ENCODE measurements at regions of chr11 and their contacts with region 1.

Region 1: DNA sequence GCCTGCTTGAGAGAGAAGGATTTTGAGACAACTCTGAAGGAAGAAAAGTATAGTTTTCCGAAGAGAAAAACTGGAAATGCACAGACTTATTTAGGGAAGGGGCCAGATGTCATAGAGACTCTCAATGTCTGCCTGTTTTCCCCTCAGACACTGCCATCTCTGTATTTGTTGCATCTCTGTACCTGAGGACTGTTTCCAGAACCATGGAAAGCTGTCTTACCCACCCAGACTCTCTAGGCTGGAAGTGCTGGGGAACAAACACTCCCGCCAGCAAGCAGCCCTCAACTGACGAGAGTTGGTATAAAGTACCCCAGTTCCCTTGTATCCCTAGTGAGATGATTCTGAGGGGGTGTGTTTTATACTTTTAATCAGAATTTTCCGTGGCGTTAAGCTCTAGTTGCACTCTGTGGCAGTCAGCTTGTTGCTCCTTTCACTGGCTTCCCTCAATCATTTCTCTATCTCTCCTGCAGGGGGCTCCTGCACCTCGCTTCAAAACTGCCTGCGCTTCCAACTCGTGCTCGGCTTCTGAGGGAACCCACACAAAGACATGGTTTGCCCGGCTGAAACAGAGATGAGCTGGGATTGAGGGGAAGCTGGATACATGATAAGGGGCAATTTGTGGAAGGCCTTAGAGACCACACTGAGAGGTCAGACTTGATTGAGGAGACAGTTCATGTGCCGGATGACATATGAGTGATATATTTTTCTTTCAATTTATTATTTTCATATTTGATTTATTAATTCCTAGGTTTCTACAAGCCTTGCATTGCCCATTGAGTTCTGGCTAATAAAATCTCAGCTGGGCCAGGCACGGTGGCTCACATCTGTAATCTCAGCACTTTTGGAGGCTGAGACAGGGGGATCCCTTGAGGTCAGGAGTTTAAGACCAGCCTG is 36.9 kb upstream of the CLPB start:
- DNase-seq: peak; percentile 61 to 75
- H3K4me3 ChIP-seq: no peak overlapping the region
- H3K27ac ChIP-seq: no peak overlapping the region
- H3K4me1 ChIP-seq: peaks cover 0 to 8% of the 10 kb centered on the region in 2 donors
- H3K27me3 ChIP-seq: no peaks in the 10 kb centered on the region
- CTCF ChIP-seq: peak; percentile 58 to 90 (median 85)
- POLR2A ChIP-seq: no peak

Region 2: DNA sequence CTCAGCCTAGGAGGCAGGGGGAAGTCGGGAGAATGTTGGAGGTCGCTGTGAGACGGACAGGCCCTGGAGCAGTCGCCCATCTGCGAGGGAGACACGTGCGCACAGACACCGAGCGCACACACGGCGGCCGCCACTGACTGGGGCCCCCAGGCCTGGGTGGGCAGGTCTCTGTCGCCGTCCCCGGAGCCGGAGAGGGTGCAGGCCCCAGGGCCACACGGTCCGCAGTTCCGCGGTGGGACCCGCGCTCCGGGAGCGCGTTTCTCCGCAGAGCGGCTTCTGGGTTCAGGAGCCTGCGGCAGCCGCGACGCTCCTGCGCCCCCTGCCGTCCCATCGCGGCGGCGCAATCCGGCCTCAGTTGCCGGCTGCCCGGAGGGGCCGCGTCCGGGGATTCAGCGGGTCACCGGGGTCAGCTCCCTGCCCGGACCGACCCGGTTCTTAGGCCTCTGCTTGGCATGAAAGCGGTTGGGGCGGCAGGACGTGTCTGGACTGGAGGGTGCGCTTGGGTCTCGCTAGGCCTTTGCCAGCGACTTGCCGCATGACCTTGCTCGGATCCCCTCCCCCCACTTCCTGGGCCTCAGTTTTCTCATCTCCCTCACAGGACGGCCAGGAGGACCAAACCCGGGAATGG is 171.7 kb after region 1 on chr11:
- intact Hi-C with region 1: loop called (anchors 10 kb)
- DNase-seq: peak; percentile 29
- H3K4me3 ChIP-seq: peak overlapping the region in 2 of 3 donors; percentile 49 to 50
- H3K27ac ChIP-seq: no peak overlapping the region
- H3K4me1 ChIP-seq: peaks cover 11% of the 10 kb centered on the region in 2 donors
- H3K27me3 ChIP-seq: no peaks in the 10 kb centered on the region
- CTCF ChIP-seq: peak; percentile 55 to 96 (median 88)
- POLR2A ChIP-seq: no peak

Region 3: DNA sequence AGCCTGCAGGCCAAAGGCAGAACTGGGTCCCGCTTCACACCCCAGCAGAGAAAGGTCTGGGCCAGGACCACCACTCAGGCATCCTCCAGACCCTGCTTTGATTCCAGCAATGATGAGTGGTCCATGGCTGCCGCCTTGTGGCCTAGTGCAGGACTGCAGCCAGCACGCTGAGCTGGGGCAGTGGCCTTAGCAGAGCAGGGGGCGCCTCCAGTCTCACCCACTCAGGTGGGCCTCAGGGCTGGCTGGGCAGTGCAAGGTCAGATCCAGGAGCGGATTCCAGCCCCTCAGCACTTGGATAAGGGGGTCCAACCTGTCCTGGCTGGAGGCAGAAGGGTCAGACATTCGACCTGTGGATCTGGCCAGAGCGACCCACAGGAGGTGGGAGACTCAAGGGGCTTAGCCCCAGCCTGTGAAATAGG is 212.5 kb after region 1 on chr11:
- intact Hi-C with region 1: loop called (anchors 5 kb)
- DNase-seq: peak; percentile 54 to 60
- H3K4me3 ChIP-seq: no peak overlapping the region
- H3K27ac ChIP-seq: no peak overlapping the region
- H3K4me1 ChIP-seq: no peaks in the 10 kb centered on the region
- H3K27me3 ChIP-seq: no peaks in the 10 kb centered on the region
- CTCF ChIP-seq: peak; percentile 69 to 94 (median 84)
- POLR2A ChIP-seq: no peak